ENCODE measurements at regions of chr4 and their contacts with region 1.

Region 1: DNA sequence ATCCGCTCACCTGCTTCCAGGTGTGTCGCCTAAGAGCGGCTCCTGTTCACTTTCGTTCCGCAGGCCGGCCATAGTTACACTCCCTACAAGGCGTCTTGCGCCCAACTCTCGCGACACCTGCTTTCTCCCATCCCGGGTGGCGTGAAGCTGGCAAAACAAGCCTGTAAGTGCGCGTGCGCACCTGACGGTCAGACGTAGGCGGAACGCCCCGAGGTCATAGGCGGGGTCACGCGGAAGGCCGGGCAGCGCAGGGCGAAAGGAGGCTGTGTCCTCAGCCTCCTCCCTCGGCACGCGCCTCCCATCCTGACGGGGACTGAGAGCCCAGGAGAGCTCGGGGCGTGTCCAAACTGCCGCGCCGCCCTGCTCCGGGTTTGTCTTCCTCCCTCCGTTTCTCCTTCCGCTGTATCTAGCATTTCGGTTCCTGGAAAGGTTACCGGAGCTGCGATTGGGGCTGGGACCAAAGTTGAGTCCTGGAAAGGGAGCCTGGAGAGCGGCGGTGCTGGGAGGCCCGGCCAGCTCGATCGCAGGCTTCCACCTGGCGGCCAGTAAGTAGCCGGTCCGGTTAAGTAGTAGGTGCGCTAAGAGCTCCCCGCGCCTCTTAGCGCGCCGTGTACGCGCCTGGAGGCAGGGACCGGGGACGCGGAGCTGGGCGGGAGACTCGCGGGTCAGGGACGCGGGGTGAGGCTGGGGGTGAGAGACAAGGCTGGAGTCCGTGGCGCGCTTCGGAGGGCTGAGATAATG is at the starts of genes ABHD18 and MFSD8:
- DNase-seq: peak; percentile 100
- H3K4me3 ChIP-seq: peak within 1 kb of the TSS; percentile 83 to 96 (median 92)
- H3K4me3 Mint-ChIP-seq: peak within 1 kb of the TSS; percentile 94
- H3K27ac ChIP-seq: peak within 1 kb of the TSS; percentile 91 to 97
- H3K27ac Mint-ChIP-seq: peak within 1 kb of the TSS; percentile 91 to 97 (median 96)
- H3K4me1 ChIP-seq: peaks cover 12 to 17% of the 10 kb centered on the region in 2 donors
- H3K4me1 Mint-ChIP-seq: peaks cover 26% of the 10 kb centered on the region
- H3K27me3 ChIP-seq: no peaks in the 10 kb centered on the region
- H3K27me3 Mint-ChIP-seq: no peaks in the 10 kb centered on the region
- CTCF ChIP-seq: peak; percentile 45
- polyA plus RNA-seq, gene ABHD18: 6.1 to 9.5 (median 6.4) TPM
- polyA plus RNA-seq, gene MFSD8: 7.0 to 15.8 (median 14.2) TPM

Region 2: GRCh38 chr4:127905029-127905428 is 60.2 kb before region 1 on chr4:
- intact Hi-C with region 1: no loop called
- DNase-seq: no peak
- H3K4me3 ChIP-seq: no peak overlapping the region
- H3K4me3 Mint-ChIP-seq: no peak overlapping the region
- H3K27ac ChIP-seq: no peak overlapping the region
- H3K27ac Mint-ChIP-seq: no peak overlapping the region
- H3K4me1 ChIP-seq: no peaks in the 10 kb centered on the region
- H3K4me1 Mint-ChIP-seq: no peaks in the 10 kb centered on the region
- H3K27me3 ChIP-seq: no peaks in the 10 kb centered on the region
- H3K27me3 Mint-ChIP-seq: no peaks in the 10 kb centered on the region
- CTCF ChIP-seq: no peak

Region 3: GRCh38 chr4:127997534-127998388 is 32.5 kb after region 1 on chr4:
- intact Hi-C with region 1: no loop called
- DNase-seq: peak; percentile 15 to 52 (median 40)
- H3K4me3 ChIP-seq: no peak overlapping the region
- H3K4me3 Mint-ChIP-seq: no peak overlapping the region
- H3K27ac ChIP-seq: peak overlapping the region in 1 of 2 donors; percentile 33
- H3K27ac Mint-ChIP-seq: peak overlapping the region; percentile 7 to 94 (median 63)
- H3K4me1 ChIP-seq: peaks cover 7 to 18% of the 10 kb centered on the region in 2 donors
- H3K4me1 Mint-ChIP-seq: peaks cover 25% of the 10 kb centered on the region
- H3K27me3 ChIP-seq: no peaks in the 10 kb centered on the region
- H3K27me3 Mint-ChIP-seq: peaks cover 0 to 2% (median 0%) of the 10 kb centered on the region in 3 donors
- CTCF ChIP-seq: peak; percentile 51

Region 4: GRCh38 chr4:128060699-128061565 is 95.7 kb after region 1 on chr4 and contains the start of gene LARP1B:
- intact Hi-C with region 1: loop called in 1 of 2 experiments (anchors 10 kb)
- DNase-seq: peak; percentile 85 to 89 (median 85)
- H3K4me3 ChIP-seq: peak within 1 kb of the TSS; percentile 51 to 82 (median 52)
- H3K4me3 Mint-ChIP-seq: peak within 1 kb of the TSS; percentile 85 to 92
- H3K27ac ChIP-seq: peak within 1 kb of the TSS; percentile 55 to 75
- H3K27ac Mint-ChIP-seq: peak within 1 kb of the TSS; percentile 71 to 92 (median 87)
- H3K4me1 ChIP-seq: peaks cover 10 to 20% of the 10 kb centered on the region in 2 donors
- H3K4me1 Mint-ChIP-seq: peaks cover 13% of the 10 kb centered on the region
- H3K27me3 ChIP-seq: no peaks in the 10 kb centered on the region
- H3K27me3 Mint-ChIP-seq: peaks cover 0 to 5% (median 2%) of the 10 kb centered on the region in 3 donors
- CTCF ChIP-seq: no peak
- polyA plus RNA-seq, gene LARP1B: 3.0 to 5.7 (median 3.7) TPM